ENCODE measurements at regions of chr15 and their contacts with region 1.

Region 1: DNA sequence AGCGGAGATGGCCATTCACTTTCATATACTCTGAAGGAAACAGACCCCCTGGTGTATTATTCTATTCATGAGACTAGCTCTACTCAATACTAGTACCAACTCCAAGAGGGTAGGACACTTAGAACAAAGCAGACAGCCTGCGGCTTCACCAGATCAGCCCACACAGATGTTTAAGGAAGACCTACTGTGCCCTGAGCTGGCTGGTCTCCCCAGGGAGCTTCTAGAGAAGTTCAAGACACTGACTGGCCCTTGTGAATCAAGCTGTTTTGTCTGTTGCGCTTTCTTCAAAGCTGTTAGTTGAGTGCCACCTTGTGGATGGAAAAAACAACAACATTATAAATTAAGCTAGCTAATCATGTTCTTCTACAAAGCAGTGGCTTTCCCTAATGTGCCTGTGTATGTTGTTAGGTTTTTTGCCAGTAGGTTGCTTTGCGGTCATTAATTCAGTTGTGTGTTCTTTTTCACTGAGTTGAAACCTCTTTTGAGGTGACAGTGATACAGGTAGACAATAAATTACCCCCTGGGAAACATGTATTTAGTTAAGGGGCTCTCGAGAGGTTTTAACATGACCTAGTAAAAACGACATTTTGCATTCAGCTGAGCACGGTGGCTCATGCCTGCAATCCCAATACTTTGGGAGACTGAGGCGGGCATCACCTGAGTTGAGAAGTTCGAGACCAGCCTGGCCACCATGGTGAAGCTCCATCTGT is 64.2 kb upstream of the MYZAP start:
- DNase-seq: no peak
- H3K4me3 ChIP-seq: no peak overlapping the region
- H3K27ac ChIP-seq: no peak overlapping the region
- H3K4me1 ChIP-seq: peaks cover 0 to 8% (median 0%) of the 10 kb centered on the region in 6 donors
- H3K27me3 ChIP-seq: peaks cover 0 to 43% (median 4%) of the 10 kb centered on the region in 7 donors
- CTCF ChIP-seq: peak; percentile 17 to 65 (median 41)
- POLR2A ChIP-seq: no peak

Region 2: GRCh38 chr15:57340682-57341259 is 186.8 kb before region 1 on chr15:
- intact Hi-C with region 1: loop called (anchors 5 kb)
- DNase-seq: no peak
- H3K4me3 ChIP-seq: no peak overlapping the region
- H3K27ac ChIP-seq: no peak overlapping the region
- H3K4me1 ChIP-seq: peaks cover 0 to 6% (median 0%) of the 10 kb centered on the region in 6 donors
- H3K27me3 ChIP-seq: peaks cover 0 to 41% (median 0%) of the 10 kb centered on the region in 7 donors
- CTCF ChIP-seq: peak; percentile 39 to 79 (median 72)
- POLR2A ChIP-seq: no peak

Region 3: GRCh38 chr15:57751177-57751800 is 223.8 kb after region 1 on chr15:
- intact Hi-C with region 1: no loop called
- DNase-seq: no peak
- H3K4me3 ChIP-seq: no peak overlapping the region
- H3K27ac ChIP-seq: no peak overlapping the region
- H3K4me1 ChIP-seq: peaks cover 0 to 9% (median 0%) of the 10 kb centered on the region in 6 donors
- H3K27me3 ChIP-seq: no peaks in the 10 kb centered on the region
- CTCF ChIP-seq: peak in 9 of 11 experiments; percentile 17 to 51 (median 34)
- POLR2A ChIP-seq: no peak